ENCODE measurements at regions of chr11 and their contacts with region 1.

Region 1: DNA sequence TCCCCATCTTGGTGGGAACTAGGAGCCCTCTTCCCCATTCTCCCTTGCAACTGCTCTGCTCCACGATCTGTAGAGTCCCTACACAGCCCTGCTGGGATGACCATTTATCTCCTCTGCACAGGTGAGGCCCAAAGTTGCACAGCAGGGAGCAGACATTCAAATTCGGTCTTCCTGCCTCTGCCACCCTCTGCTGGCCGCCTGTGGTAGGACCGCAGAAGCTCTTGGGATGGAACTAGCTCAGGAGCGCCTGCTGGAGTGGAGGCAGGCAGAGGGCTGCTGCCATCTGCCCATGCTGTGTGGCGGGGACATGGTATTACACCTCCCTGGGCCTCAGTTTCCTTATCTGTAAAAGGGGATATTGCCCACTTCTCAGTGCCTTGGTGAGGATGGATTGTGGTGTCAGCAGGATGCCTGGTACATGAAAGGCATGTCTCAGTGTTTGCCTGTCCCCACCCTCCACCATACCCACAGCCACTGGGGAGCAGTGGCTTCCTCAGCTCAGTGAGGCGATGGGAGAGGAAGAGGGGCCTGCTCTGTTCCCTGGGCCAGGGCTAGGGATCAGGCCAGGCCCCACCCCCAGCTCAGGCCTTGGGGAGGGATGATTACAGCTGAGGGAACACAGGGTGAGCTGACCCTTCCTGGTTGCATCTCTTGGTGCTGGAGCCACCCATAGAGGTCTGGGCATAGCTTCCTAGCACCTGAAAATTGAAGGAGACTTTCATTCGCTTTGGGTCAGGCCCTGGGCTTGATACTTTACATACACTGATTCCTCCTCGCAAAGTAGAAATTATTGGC is 11.3 kb upstream of the OMP start:
- DNase-seq: peak; percentile 86
- H3K4me3 Mint-ChIP-seq: no peak overlapping the region
- H3K27ac Mint-ChIP-seq: no peak overlapping the region
- H3K4me1 Mint-ChIP-seq: peaks cover 2% of the 10 kb centered on the region
- H3K27me3 Mint-ChIP-seq: no peaks in the 10 kb centered on the region

Region 2: GRCh38 chr11:76734456-76735420 is 356.6 kb before region 1 on chr11:
- CTCF ChIA-PET with region 1: interaction called, 18 read pairs
- POLR2A ChIA-PET with region 1: no interaction called
- intact Hi-C with region 1: loop called (anchors 5 kb)
- DNase-seq: no peak
- H3K4me3 Mint-ChIP-seq: no peak overlapping the region
- H3K27ac Mint-ChIP-seq: no peak overlapping the region
- H3K4me1 Mint-ChIP-seq: no peaks in the 10 kb centered on the region
- H3K27me3 Mint-ChIP-seq: peaks cover 2% of the 10 kb centered on the region

Region 3: DNA sequence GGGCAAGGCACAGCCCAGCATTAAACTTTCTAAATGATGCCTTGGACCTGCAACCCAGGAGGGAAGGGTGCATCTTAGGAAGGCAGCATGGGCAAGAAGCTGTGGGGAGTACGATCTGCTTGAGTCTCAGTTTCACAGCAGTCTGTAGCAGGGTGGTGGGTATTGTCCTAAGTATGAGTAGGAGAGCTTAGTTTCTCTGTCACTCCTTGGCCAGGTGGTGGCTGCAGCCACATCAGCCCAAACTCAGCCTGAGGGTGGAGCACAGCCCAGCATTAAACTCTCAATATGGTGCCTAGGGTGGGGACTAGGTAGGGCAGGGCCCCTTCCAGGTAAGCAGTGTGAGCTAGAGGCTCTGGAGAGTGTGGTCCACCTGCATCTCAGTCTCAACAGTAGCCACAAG is 145.1 kb before region 1 on chr11:
- CTCF ChIA-PET with region 1: no interaction called
- POLR2A ChIA-PET with region 1: no interaction called
- intact Hi-C with region 1: no loop called
- DNase-seq: no peak
- H3K4me3 Mint-ChIP-seq: no peak overlapping the region
- H3K27ac Mint-ChIP-seq: no peak overlapping the region
- H3K4me1 Mint-ChIP-seq: no peaks in the 10 kb centered on the region
- H3K27me3 Mint-ChIP-seq: no peaks in the 10 kb centered on the region

Region 4: GRCh38 chr11:77039491-77040400 is 51.6 kb before region 1 on chr11:
- CTCF ChIA-PET with region 1: interaction called, 32 read pairs
- POLR2A ChIA-PET with region 1: no interaction called
- intact Hi-C with region 1: no loop called
- DNase-seq: peak; percentile 40
- H3K4me3 Mint-ChIP-seq: no peak overlapping the region
- H3K27ac Mint-ChIP-seq: no peak overlapping the region
- H3K4me1 Mint-ChIP-seq: peaks cover 8% of the 10 kb centered on the region
- H3K27me3 Mint-ChIP-seq: peaks cover 37% of the 10 kb centered on the region

Region 5: DNA sequence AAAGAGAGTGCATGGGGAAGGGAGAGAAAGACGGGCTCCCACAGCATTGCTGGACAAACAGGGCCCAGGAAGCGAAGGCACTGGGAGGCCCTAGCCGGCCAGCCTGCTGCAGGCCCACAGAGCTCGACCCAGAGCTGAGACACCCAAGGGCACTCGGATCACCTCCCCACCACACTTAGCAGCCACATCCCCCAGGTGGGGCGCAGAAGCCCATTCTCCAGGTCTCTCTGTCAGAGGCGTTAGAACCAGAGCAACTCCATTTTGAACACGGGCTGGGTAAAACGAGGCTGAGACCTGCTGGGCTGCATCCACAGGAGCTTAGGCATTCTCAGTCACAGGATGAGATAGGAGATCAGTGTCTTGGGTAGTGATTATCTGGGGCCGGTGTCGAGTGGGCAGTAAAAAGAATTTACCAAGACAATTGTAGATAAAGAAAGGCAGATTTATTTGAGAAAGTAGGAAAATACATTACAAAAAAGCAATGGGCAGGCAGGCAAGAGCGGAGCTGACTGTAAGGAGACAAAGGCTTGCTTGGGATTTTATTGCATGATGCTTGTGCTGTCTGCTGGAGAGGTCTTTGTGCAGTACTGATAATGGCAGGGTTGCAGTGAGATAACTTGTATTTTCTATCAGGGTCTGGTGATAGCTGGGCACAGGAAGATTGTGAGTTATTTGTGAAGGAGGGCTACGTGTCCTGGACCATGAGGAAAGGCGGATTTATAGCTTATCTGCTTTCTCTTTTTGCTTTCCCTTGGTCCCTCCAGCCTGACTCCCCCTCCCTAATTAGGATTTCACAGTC is 37.9 kb before region 1 on chr11:
- CTCF ChIA-PET with region 1: interaction called, 92 read pairs
- POLR2A ChIA-PET with region 1: no interaction called
- intact Hi-C with region 1: no loop called
- DNase-seq: no peak
- H3K4me3 Mint-ChIP-seq: no peak overlapping the region
- H3K27ac Mint-ChIP-seq: no peak overlapping the region
- H3K4me1 Mint-ChIP-seq: no peaks in the 10 kb centered on the region
- H3K27me3 Mint-ChIP-seq: no peaks in the 10 kb centered on the region

Region 6: GRCh38 chr11:77107950-77108349 is 16.6 kb after region 1 on chr11:
- CTCF ChIA-PET with region 1: interaction called, 13 read pairs
- POLR2A ChIA-PET with region 1: no interaction called
- intact Hi-C with region 1: no loop called
- DNase-seq: no peak
- H3K4me3 Mint-ChIP-seq: no peak overlapping the region
- H3K27ac Mint-ChIP-seq: no peak overlapping the region
- H3K4me1 Mint-ChIP-seq: no peaks in the 10 kb centered on the region
- H3K27me3 Mint-ChIP-seq: no peaks in the 10 kb centered on the region

Region 7: DNA sequence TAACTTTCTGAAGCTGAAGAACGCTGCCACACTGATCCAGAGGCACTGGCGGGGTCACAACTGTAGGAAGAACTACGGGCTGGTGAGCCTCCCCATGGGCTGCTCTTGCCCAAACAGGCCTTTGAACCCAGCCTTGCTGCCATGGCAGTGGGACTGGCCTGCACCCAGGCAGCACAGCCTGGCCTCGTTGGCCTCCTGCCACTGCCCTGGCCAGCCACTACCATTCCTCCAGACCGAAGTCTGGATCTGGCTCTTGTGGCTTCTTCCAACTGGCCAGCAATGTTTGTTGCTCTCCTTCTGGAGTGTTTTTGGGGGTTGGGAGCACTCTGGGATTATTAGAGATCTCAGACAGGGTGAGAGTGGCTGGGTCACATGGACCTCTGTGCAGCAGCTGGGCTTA is 87.7 kb after region 1 on chr11:
- CTCF ChIA-PET with region 1: no interaction called
- POLR2A ChIA-PET with region 1: no interaction called
- intact Hi-C with region 1: no loop called
- DNase-seq: no peak
- H3K4me3 Mint-ChIP-seq: no peak overlapping the region
- H3K27ac Mint-ChIP-seq: no peak overlapping the region
- H3K4me1 Mint-ChIP-seq: no peaks in the 10 kb centered on the region
- H3K27me3 Mint-ChIP-seq: no peaks in the 10 kb centered on the region